ENCODE measurements at regions of chr19 and their contacts with region 1.

Region 1: GRCh38 chr19:14479975-14480699 is 5.0 kb upstream of the PTGER1 start:
- DNase-seq: peak; percentile 74
- ATAC-seq: peak; percentile 70
- H3K4me3 Mint-ChIP-seq: no peak overlapping the region
- H3K27ac Mint-ChIP-seq: no peak overlapping the region
- H3K4me1 Mint-ChIP-seq: peaks cover 16% of the 10 kb centered on the region
- H3K27me3 Mint-ChIP-seq: no peaks in the 10 kb centered on the region

Region 2: GRCh38 chr19:14432791-14433553 is 47.2 kb before region 1 on chr19 and contains the start of gene PKN1:
- CTCF ChIA-PET with region 1: interaction called, 30 read pairs
- POLR2A ChIA-PET with region 1: no interaction called
- DNase-seq: peak; percentile 60
- ATAC-seq: peak; percentile 54
- H3K4me3 Mint-ChIP-seq: peak within 1 kb of the TSS; percentile 79
- H3K27ac Mint-ChIP-seq: peak within 1 kb of the TSS; percentile 80
- H3K4me1 Mint-ChIP-seq: peaks cover 41% of the 10 kb centered on the region
- H3K27me3 Mint-ChIP-seq: peaks cover 4% of the 10 kb centered on the region
- total RNA-seq, gene PKN1: 244 to 263 TPM

Region 3: DNA sequence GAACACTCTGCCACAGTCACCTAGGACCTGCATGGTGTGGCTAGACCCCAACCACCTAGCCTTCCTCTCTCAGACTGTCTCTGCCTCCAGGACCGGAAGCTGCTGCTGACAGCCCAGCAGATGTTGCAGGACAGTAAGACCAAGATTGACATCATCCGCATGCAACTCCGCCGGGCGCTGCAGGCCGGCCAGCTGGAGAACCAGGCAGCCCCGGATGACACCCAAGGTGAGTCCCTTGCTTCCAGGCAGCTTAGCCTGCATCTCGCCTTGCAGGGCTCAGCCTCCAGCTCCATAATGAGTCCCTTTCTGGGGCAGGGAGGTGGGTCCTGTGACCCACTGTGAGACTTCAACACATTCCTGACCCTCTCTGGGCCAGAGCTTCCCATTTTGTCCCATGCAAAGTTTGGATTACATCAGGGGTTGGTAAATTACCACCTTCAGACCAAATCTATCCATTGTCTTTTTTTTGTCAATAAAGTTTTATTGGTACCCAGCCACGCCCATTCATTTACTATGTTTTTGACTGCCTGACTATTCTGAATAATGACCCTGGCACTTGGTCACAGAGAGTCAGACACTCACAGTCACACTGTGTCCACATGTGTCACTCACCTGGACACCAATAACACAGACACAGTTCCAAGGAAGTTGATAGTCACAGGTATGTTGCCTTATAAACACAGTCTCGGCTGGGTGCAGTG is 33.7 kb before region 1 on chr19:
- CTCF ChIA-PET with region 1: no interaction called
- POLR2A ChIA-PET with region 1: no interaction called
- DNase-seq: no peak
- ATAC-seq: no peak
- H3K4me3 Mint-ChIP-seq: no peak overlapping the region
- H3K27ac Mint-ChIP-seq: no peak overlapping the region
- H3K4me1 Mint-ChIP-seq: peaks cover 15% of the 10 kb centered on the region
- H3K27me3 Mint-ChIP-seq: no peaks in the 10 kb centered on the region

Region 4: GRCh38 chr19:14463747-14464146 is 16.4 kb before region 1 on chr19:
- CTCF ChIA-PET with region 1: interaction called, 16 read pairs
- POLR2A ChIA-PET with region 1: no interaction called
- DNase-seq: no peak
- ATAC-seq: no peak
- H3K4me3 Mint-ChIP-seq: no peak overlapping the region
- H3K27ac Mint-ChIP-seq: no peak overlapping the region
- H3K4me1 Mint-ChIP-seq: peaks cover 11% of the 10 kb centered on the region
- H3K27me3 Mint-ChIP-seq: no peaks in the 10 kb centered on the region

Region 5: GRCh38 chr19:14496028-14496833 is 16.1 kb after region 1 on chr19 and contains the start of gene GIPC1:
- CTCF ChIA-PET with region 1: interaction called, 28 read pairs
- POLR2A ChIA-PET with region 1: interaction called, 3 read pairs
- DNase-seq: peak; percentile 81
- ATAC-seq: peak; percentile 91
- H3K4me3 Mint-ChIP-seq: peak within 1 kb of the TSS; percentile 80
- H3K27ac Mint-ChIP-seq: peak within 1 kb of the TSS; percentile 78
- H3K4me1 Mint-ChIP-seq: peaks cover 35% of the 10 kb centered on the region
- H3K27me3 Mint-ChIP-seq: peaks cover 2% of the 10 kb centered on the region
- total RNA-seq, gene GIPC1: 37.9 to 39.3 TPM

Region 6: DNA sequence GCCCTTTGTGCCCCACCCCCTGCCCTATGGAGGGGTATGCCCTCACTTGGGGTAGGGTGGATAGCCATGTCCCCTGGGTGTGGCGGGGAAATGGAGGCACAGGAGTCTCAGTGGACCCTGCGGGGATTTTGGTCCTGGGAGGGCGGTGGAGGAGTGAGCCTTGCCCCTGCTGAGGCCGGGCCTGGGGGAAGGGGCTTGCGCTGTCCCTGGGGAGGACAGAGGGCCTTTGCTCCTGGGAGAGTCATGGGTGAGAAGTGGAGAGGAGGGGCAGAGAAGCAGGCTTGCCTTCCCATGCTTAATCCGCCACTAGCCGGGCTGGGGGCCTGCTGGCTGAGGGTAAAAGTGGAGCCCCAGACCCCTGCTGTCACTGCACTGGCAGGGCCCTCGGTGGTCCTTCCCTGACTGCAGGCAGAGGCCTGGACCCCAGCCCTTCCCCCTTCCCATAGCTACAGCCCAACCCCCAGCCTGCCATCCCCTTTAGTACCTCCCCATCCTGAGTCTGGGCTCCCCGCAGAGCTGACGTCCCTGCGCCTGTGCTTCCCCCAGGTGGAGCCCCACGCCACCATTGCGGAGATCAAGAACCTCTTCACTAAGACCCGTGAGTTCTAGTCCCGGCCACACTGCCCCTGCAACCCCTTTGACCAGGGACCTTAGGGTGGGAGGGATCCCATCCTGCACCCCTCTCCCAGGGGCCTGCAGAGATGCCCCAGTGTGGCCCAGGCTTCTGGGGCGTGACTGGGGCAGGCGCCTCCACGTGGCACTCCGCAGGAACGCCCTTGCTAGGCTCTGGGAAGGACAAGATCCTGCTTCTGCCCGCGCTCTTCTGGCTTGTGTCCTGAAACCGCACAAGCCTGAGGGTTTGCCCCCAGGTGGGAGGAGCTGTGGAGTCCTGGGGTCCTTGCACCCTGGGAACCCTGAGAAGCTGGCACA is 82.8 kb after region 1 on chr19:
- CTCF ChIA-PET with region 1: no interaction called
- POLR2A ChIA-PET with region 1: no interaction called
- DNase-seq: no peak
- ATAC-seq: no peak
- H3K4me3 Mint-ChIP-seq: no peak overlapping the region
- H3K27ac Mint-ChIP-seq: peak overlapping the region; percentile 66
- H3K4me1 Mint-ChIP-seq: peaks cover 31% of the 10 kb centered on the region
- H3K27me3 Mint-ChIP-seq: no peaks in the 10 kb centered on the region

Region 7: GRCh38 chr19:14595516-14595915 is 115.4 kb after region 1 on chr19:
- CTCF ChIA-PET with region 1: no interaction called
- POLR2A ChIA-PET with region 1: no interaction called
- DNase-seq: no peak
- ATAC-seq: no peak
- H3K4me3 Mint-ChIP-seq: no peak overlapping the region
- H3K27ac Mint-ChIP-seq: no peak overlapping the region
- H3K4me1 Mint-ChIP-seq: no peaks in the 10 kb centered on the region
- H3K27me3 Mint-ChIP-seq: no peaks in the 10 kb centered on the region